Common myeloid progenitor, CD34-positive (primary cell): ENCODE measurements at regions of chr3 and their contacts with region 1.

Region 1: DNA sequence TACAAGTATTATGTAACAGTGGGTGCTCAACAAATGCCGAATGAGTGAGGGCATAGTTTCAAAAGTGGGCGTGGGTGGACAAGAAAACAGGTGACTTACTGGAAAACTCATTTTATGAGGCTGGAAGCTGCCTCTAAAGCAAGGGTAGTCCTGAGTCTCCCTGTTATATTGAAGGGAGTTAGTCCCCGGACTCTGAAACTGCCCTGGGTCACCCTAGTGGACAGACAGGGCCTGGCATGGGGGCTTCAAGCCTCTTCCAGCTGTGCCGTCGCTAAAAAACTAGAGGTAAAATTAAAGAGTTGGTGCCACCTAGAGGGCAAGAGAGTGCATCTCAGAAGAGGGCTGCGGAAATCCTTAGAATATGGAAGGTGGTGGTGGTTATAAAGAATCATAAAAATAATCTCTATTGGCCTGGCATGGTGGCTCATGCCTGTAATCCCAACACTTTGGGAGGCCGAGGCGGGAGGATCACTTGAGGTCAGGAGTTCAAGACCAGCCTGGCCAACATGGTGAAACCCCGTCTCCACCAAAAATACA is 3.7 kb upstream of the COPG1 start:
- DNase-seq: peak; percentile 92 to 96 (median 94)
- H3K4me3 ChIP-seq: peak overlapping the region in 2 of 7 experiments; percentile 20 to 49
- H3K27ac ChIP-seq: no peak overlapping the region
- H3K4me1 ChIP-seq: peaks cover 6 to 29% (median 26%) of the 10 kb centered on the region in 4 experiments
- H3K27me3 ChIP-seq: no peaks in the 10 kb centered on the region

Region 2: GRCh38 chr3:129016356-129016719 is 229.4 kb before region 1 on chr3:
- CTCF ChIA-PET with region 1: interaction called, 12 read pairs
- POLR2A ChIA-PET with region 1: interaction called, 3 read pairs
- DNase-seq: peak; percentile 89 to 97 (median 95)
- H3K4me3 ChIP-seq: peak overlapping the region in 5 of 7 experiments; percentile 13 to 59 (median 48)
- H3K27ac ChIP-seq: peak overlapping the region; percentile 27 to 75
- H3K4me1 ChIP-seq: peaks cover 8 to 54% (median 52%) of the 10 kb centered on the region in 4 experiments
- H3K27me3 ChIP-seq: no peaks in the 10 kb centered on the region

Region 3: GRCh38 chr3:129121792-129122411 is 123.8 kb before region 1 on chr3 and contains the start of gene RAB43:
- CTCF ChIA-PET with region 1: interaction called, 14 read pairs
- POLR2A ChIA-PET with region 1: no interaction called
- DNase-seq: peak; percentile 81 to 88 (median 86)
- H3K4me3 ChIP-seq: peak within 1 kb of the TSS; percentile 58 to 90 (median 78)
- H3K27ac ChIP-seq: peak within 1 kb of the TSS in 1 of 2 experiments; percentile 66
- H3K4me1 ChIP-seq: peaks cover 11 to 58% (median 46%) of the 10 kb centered on the region in 4 experiments
- H3K27me3 ChIP-seq: no peaks in the 10 kb centered on the region

Region 4: DNA sequence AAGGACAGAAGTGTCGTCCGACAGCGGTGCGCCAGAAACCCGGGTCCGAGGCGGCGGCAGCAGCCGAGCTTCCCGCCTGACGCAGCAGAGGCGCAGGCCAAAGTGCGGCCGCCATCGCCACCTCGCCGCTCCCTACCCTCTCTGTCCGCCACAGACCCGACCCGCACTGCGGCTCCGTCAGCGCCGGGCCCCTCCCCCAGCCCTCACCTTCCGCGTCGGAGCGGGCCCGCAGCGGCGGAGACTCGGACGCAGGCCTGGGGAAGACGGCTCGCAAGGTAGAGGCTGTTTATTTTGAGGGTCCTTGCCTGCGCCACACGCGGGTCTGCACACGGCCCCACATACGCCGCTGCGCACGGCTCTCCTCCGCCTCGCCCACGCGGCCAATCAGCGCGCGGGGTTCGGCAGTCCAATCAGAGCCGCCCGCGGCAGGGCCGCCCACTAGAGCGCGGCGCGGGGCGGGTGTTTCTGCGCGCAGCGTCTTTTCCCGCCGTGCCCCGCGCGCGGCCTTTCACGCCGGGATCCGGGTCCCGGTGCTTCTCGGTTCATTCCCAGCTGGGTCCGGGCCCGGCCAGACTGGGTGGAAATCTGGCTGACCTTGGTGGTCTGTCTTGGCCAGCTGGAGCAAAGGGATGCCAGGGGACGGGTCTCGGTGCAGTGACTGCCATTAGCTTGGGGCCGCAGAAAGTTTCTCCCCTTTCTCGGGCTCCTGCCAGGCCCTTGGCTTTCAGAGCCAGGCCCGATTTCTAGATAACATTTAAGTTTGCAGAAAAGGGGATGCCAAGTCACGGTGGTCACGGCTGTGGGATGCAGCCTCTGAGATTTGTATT is 61.9 kb before region 1 on chr3 and contains the start of gene CNBP:
- CTCF ChIA-PET with region 1: interaction called, 30 read pairs
- POLR2A ChIA-PET with region 1: interaction called, 4 read pairs
- DNase-seq: peak; percentile 95 to 98 (median 97)
- H3K4me3 ChIP-seq: peak within 1 kb of the TSS; percentile 69 to 98 (median 93)
- H3K27ac ChIP-seq: peak within 1 kb of the TSS; percentile 96 to 98
- H3K4me1 ChIP-seq: peaks cover 25 to 47% (median 40%) of the 10 kb centered on the region in 4 experiments
- H3K27me3 ChIP-seq: no peaks in the 10 kb centered on the region

Region 5: DNA sequence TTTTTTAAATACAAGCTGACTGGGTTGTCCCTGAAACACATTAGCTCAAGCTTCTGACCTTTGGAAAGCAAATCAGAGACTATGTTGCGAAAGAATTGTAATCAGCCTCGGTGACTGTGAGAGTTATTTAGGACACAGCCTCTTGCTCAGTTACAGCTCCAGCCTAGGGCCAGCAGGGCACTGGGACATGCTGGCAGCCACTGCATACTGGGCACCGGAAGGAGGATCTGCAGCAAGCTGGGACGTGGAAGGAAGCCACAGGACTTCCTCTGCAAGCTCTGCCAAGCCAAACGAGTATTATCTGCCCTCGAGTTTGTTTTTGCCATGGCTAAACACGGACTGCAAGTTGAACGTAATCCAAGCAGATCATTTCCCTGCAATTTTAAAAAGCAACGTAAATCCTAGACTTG is 20.7 kb before region 1 on chr3:
- CTCF ChIA-PET with region 1: interaction called, 27 read pairs
- POLR2A ChIA-PET with region 1: interaction called, 4 read pairs
- DNase-seq: peak in 1 of 3 donors; percentile 47
- H3K4me3 ChIP-seq: peak overlapping the region in 6 of 7 experiments; percentile 33 to 76 (median 50)
- H3K27ac ChIP-seq: peak overlapping the region; percentile 2 to 36
- H3K4me1 ChIP-seq: peaks cover 23 to 56% (median 39%) of the 10 kb centered on the region in 4 experiments
- H3K27me3 ChIP-seq: no peaks in the 10 kb centered on the region

Region 6: DNA sequence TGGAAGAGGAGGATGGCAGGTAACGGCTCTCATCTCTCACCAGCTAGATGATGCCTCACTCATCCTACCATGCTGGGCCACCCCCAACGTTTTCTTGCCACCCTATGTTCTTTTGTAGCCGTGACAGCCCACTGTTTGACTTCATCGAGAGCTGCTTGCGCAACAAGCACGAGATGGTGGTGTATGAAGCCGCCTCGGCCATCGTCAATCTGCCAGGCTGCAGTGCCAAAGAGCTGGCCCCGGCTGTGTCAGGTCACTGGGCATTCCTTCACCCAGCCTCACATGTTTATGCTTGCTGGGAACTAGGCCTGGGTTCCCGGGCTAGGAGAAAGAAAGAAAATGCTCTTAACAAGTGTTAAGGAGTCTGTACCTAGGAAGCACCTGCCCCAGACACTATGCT is 11.9 kb after region 1 on chr3:
- CTCF ChIA-PET with region 1: interaction called, 11 read pairs
- POLR2A ChIA-PET with region 1: no interaction called
- DNase-seq: no peak
- H3K4me3 ChIP-seq: no peak overlapping the region
- H3K27ac ChIP-seq: no peak overlapping the region
- H3K4me1 ChIP-seq: no peaks in the 10 kb centered on the region
- H3K27me3 ChIP-seq: no peaks in the 10 kb centered on the region

Region 7: DNA sequence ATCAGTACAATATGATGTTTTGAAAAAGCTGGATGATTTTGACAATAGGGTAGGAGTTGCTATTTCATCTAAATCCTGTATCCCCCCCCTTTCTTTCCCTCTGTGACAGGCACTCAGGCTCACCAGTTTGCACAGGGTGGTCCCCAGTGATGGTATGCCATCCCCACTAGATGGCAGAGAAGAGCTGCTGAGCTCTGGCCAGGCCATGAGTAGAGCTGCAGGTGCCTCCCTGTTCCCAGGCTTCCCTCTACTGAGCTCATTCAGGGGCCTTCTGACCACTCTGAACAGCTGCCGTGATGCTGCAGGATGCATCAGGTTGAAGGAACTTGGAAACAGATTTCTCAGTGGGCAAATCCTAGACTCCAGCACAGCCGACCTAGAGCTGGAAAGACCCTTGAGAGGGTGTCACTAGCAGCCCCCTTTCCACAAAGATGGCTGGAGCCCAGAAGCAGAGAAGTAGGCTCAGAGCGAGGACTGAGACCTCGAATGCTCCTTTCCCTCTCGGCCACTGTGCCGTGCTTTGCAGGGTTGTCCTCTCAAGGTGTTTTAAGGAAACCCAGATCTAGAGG is 137.7 kb after region 1 on chr3:
- CTCF ChIA-PET with region 1: no interaction called
- POLR2A ChIA-PET with region 1: no interaction called
- DNase-seq: peak; percentile 47 to 70 (median 68)
- H3K4me3 ChIP-seq: no peak overlapping the region
- H3K27ac ChIP-seq: no peak overlapping the region
- H3K4me1 ChIP-seq: peaks cover 0 to 8% (median 2%) of the 10 kb centered on the region in 4 experiments
- H3K27me3 ChIP-seq: no peaks in the 10 kb centered on the region